Left cardiac atrium (tissue), 4 donors: ENCODE measurements at regions of chr3 and their contacts with region 1.

Region 1: GRCh38 chr3:94513600-94513999 is 450.7 kb downstream of the NSUN3 start:
- DNase-seq: no peak
- ATAC-seq: no peak

Region 2: GRCh38 chr3:94453864-94454263 is 59.7 kb before region 1 on chr3:
- intact Hi-C with region 1: loop called in 1 of 2 experiments (anchors 2 kb)
- DNase-seq: no peak
- ATAC-seq: no peak

Region 3: DNA sequence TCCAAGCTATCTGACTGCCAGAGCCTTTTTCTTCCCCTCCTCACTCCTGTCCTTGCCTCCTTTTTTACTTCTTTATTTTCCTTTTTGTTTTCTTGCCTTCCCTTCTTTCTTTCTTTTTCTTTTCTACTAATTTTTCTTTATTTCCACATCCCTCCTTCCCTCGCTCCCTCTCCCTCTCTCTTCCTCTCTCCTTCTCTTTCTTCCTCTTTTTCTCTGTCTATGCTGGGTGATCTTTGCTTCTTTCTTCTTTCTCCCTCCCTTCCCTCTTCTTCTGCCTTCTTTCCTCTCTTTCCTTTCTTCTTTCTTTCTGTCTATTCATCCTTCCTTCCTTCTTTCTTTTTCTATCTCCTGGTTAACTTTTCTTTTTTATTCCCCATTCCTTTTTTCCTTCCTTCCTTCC is 114.1 kb after region 1 on chr3:
- intact Hi-C with region 1: no loop called
- DNase-seq: no peak
- ATAC-seq: no peak